ENCODE measurements at regions of chr7 and their contacts with region 1.

Region 1: GRCh38 chr7:119254742-119255141 is 1018.2 kb upstream of the KCND2 start:
- DNase-seq: no peak
- H3K4me3 Mint-ChIP-seq: no peak overlapping the region
- H3K27ac Mint-ChIP-seq: peak overlapping the region; percentile 33
- H3K4me1 Mint-ChIP-seq: peaks cover 17% of the 10 kb centered on the region
- H3K27me3 Mint-ChIP-seq: no peaks in the 10 kb centered on the region
- CTCF ChIP-seq: no peak

Region 2: GRCh38 chr7:119545118-119545517 is 290.4 kb after region 1 on chr7:
- CTCF ChIA-PET with region 1: no interaction called
- intact Hi-C with region 1: loop called (anchors 5 kb)
- DNase-seq: no peak
- H3K4me3 Mint-ChIP-seq: no peak overlapping the region
- H3K27ac Mint-ChIP-seq: peak overlapping the region; percentile 56
- H3K4me1 Mint-ChIP-seq: peaks cover 31% of the 10 kb centered on the region
- H3K27me3 Mint-ChIP-seq: peaks cover 19% of the 10 kb centered on the region
- CTCF ChIP-seq: no peak